ENCODE measurements at regions of chr3 and their contacts with region 1.

Region 1: GRCh38 chr3:187223799-187224198 is 26.5 kb downstream of the RTP1 start:
- DNase-seq: peak; percentile 79
- H3K4me3 Mint-ChIP-seq: no peak overlapping the region
- H3K27ac Mint-ChIP-seq: peak overlapping the region; percentile 65
- H3K4me1 Mint-ChIP-seq: peaks cover 33% of the 10 kb centered on the region
- H3K27me3 Mint-ChIP-seq: peaks cover 5% of the 10 kb centered on the region
- CTCF ChIP-seq: no peak

Region 2: GRCh38 chr3:187112934-187113793 is 110.6 kb before region 1 on chr3:
- CTCF ChIA-PET with region 1: interaction called, 7 read pairs
- intact Hi-C with region 1: loop called (anchors 1 kb)
- DNase-seq: peak; percentile 24
- H3K4me3 Mint-ChIP-seq: no peak overlapping the region
- H3K27ac Mint-ChIP-seq: no peak overlapping the region
- H3K4me1 Mint-ChIP-seq: peaks cover 12% of the 10 kb centered on the region
- H3K27me3 Mint-ChIP-seq: no peaks in the 10 kb centered on the region
- CTCF ChIP-seq: peak; percentile 59

Region 3: DNA sequence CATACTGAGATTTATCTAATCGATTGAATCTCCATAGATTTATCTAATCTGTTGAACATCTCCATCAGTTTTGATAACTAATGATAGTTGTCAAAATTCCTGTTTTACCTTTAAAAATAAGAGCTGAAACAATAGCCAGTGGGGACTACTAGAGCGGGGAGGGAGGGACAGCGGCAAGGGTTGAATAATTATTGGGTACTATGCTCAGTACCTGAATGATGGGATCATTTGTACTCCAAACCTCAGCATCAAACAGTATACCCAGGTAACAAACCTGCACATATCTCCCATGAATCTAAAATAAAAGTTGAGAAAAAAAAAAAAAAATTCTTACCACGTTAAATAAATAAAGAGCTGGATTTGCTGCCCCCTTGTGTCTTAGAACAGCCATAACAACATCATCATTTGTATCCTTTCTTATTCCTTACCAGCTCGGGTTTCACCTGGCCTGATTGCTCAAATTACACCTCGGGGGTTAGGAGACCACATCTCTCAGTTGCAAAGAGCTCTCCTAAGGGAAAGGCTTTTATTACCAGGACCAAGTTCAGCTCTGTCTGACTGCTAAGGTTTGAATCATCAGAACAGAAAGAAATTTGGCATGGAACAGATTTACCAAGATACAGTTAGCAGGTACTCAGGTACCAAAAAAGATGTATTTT is 58.8 kb before region 1 on chr3:
- CTCF ChIA-PET with region 1: interaction called, 14 read pairs
- intact Hi-C with region 1: no loop called
- DNase-seq: peak; percentile 65
- H3K4me3 Mint-ChIP-seq: no peak overlapping the region
- H3K27ac Mint-ChIP-seq: no peak overlapping the region
- H3K4me1 Mint-ChIP-seq: peaks cover 23% of the 10 kb centered on the region
- H3K27me3 Mint-ChIP-seq: peaks cover 26% of the 10 kb centered on the region
- CTCF ChIP-seq: peak; percentile 65

Region 4: DNA sequence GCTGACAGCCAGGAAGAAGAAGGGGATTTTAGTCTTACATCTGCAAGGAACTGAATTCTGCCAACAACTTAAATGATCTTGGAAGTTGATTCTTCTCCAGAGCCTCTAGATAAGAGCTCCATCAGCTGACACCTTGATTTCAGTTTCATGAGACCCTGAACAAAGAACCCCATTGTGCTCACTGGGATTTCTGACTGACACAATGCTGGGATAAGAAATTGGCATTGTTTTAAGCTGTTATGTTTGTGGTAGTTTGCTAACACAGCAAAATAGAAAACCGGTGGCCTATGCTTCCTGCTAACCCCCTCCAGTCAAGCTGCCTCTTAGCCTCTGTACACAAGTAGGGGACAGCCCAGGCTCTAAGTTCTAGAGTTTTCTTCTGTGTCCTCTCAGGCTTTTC is 31.5 kb after region 1 on chr3:
- CTCF ChIA-PET with region 1: interaction called, 16 read pairs
- intact Hi-C with region 1: loop called (anchors 5 kb)
- DNase-seq: peak; percentile 49
- H3K4me3 Mint-ChIP-seq: no peak overlapping the region
- H3K27ac Mint-ChIP-seq: peak overlapping the region; percentile 16
- H3K4me1 Mint-ChIP-seq: peaks cover 21% of the 10 kb centered on the region
- H3K27me3 Mint-ChIP-seq: no peaks in the 10 kb centered on the region
- CTCF ChIP-seq: no peak

Region 5: DNA sequence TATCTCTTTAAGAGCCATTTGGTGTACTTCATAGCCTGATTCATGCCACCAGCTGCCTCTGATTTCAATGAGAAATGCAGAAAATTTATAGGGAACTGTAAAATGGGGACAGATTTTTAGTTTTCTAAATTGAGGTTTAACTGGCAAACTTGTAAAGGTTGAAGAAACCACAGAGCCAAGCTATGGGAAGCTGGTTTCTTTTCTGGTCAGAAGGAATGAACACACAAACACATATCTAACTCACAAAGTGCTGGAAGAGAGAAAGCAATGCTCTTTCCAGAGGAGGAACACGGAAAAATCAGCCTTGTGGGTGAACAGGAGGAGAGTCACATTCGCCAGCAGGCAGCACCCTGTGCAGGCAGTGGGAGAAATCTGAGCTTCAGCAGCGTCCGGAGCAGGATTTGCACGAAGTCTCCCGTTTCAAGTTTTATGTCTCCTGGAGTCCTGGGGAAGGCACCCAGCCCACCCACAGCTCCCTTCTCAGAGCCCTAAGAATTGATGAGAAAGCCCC is 67.3 kb after region 1 on chr3:
- CTCF ChIA-PET with region 1: interaction called, 22 read pairs
- intact Hi-C with region 1: loop called (anchors 1 kb)
- DNase-seq: peak; percentile 30
- H3K4me3 Mint-ChIP-seq: peak overlapping the region; percentile 18
- H3K27ac Mint-ChIP-seq: no peak overlapping the region
- H3K4me1 Mint-ChIP-seq: peaks cover 29% of the 10 kb centered on the region
- H3K27me3 Mint-ChIP-seq: no peaks in the 10 kb centered on the region
- CTCF ChIP-seq: no peak

Region 6: GRCh38 chr3:187616307-187616972 is 392.6 kb after region 1 on chr3:
- CTCF ChIA-PET with region 1: interaction called, 5 read pairs
- intact Hi-C with region 1: loop called (anchors 1 kb)
- DNase-seq: peak; percentile 79
- H3K4me3 Mint-ChIP-seq: no peak overlapping the region
- H3K27ac Mint-ChIP-seq: no peak overlapping the region
- H3K4me1 Mint-ChIP-seq: no peaks in the 10 kb centered on the region
- H3K27me3 Mint-ChIP-seq: no peaks in the 10 kb centered on the region
- CTCF ChIP-seq: peak; percentile 92